Heart left ventricle (tissue), 16 donors: ENCODE measurements at regions of chr17 and their contacts with region 1.

Region 1: DNA sequence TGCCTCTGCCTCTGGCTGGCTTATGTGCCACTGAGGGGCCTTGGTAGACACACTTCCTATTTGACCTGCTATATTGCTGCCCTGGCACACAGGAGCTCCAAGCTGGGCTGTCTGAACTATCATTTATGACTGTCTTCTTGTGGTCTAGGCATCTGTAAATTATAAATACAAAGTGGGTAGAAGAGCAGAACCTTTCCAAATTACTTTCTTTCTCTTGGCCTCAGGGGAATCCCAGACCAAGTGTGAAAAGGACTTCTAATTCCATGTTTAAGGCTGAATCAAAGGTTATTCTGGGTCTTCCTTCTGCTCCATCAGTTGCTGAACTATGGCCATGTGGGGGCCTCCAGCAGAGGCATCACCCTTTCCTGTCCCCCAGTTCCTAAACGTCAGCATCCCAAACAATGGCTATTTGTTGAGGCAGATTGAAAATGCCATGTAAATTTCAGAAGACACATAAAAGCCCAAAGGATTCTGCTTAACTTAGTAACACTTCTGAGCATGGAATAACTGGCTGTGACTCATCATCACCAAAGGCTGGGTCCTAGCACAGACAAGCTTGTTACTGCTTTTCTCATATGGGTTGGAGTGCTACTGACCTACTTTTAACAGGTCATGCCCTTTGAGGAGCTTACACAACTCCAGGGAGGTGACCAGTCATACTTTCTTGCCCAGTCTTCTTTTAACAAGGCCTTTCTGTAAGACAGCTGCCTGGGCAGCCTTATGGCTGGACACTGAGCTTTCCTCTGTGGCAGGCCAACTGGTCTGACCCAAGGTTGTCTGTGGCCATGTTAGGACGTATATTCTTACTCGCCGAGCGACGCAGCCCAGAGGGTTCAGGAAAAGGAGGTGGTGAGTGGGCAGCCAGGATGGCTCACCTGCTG is 154.8 kb downstream of the VPS53 start:
- DNase-seq: peak in 4 of 5 donors; percentile 22 to 64 (median 34)
- ATAC-seq: peak; percentile 77 to 96 (median 93)
- H3K4me3 ChIP-seq: no peak overlapping the region
- H3K27ac ChIP-seq: peak overlapping the region; percentile 49 to 89 (median 79)
- H3K4me1 ChIP-seq: peaks cover 5 to 56% (median 32%) of the 10 kb centered on the region in 12 donors
- H3K27me3 ChIP-seq: no peaks in the 10 kb centered on the region
- CTCF ChIP-seq: no peak
- POLR2A ChIP-seq: no peak

Region 2: DNA sequence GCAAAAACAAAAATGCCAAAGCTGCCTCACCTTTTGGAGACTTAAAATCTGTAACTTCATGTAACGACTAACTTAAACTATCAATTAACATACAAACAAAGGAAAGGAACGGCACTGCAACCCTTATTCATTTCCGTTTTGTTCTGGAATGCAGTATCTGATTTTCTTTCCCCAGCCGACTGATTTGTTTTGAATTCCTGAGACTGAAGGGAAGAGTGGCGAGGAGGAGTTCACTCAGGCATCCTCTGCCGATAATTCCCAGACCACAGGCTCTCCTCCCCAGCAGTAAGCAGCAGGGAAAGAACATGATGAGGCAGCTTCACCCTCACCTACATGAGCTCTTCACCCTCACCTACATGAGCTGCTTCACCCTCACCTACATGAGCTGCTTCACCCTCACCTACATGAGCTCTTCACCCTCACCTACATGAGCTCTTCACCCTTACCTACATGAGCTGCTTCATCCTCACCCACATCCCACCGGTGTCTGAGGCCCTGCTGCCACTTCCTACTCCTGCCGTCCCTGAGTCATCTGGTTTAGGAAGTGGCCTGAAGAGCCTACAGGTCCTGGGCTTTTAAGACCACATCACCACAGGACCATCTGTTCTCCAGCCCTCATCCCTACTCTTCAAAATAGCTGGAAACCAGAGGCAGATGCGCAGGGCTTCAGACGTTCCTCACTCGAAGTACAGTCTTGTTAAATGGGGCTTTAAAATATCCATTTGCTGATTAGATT is 39.2 kb before region 1 on chr17:
- intact Hi-C with region 1: loop called in 1 of 10 experiments (anchors 5 kb)
- DNase-seq: no peak
- ATAC-seq: no peak
- H3K4me3 ChIP-seq: no peak overlapping the region
- H3K27ac ChIP-seq: peak overlapping the region in 6 of 12 donors; percentile 5 to 49 (median 32)
- H3K4me1 ChIP-seq: peaks cover 0 to 35% (median 7%) of the 10 kb centered on the region in 12 donors
- H3K27me3 ChIP-seq: no peaks in the 10 kb centered on the region
- CTCF ChIP-seq: no peak
- POLR2A ChIP-seq: no peak

Region 3: GRCh38 chr17:622356-622755 is 62.6 kb after region 1 on chr17:
- intact Hi-C with region 1: loop called in 1 of 10 experiments (anchors 10 kb)
- DNase-seq: no peak
- ATAC-seq: no peak
- H3K4me3 ChIP-seq: no peak overlapping the region
- H3K27ac ChIP-seq: no peak overlapping the region
- H3K4me1 ChIP-seq: peaks cover 0 to 12% (median 0%) of the 10 kb centered on the region in 12 donors
- H3K27me3 ChIP-seq: no peaks in the 10 kb centered on the region
- CTCF ChIP-seq: no peak
- POLR2A ChIP-seq: no peak

Region 4: GRCh38 chr17:693791-694638 is 134.2 kb after region 1 on chr17:
- intact Hi-C with region 1: loop called in 3 of 10 experiments (anchors 10 kb)
- DNase-seq: no peak
- ATAC-seq: no peak
- H3K4me3 ChIP-seq: no peak overlapping the region
- H3K27ac ChIP-seq: no peak overlapping the region
- H3K4me1 ChIP-seq: peaks cover 0 to 11% (median 0%) of the 10 kb centered on the region in 12 donors
- H3K27me3 ChIP-seq: no peaks in the 10 kb centered on the region
- CTCF ChIP-seq: no peak
- POLR2A ChIP-seq: no peak